ENCODE measurements at regions of chr13 and their contacts with region 1.

Region 1: DNA sequence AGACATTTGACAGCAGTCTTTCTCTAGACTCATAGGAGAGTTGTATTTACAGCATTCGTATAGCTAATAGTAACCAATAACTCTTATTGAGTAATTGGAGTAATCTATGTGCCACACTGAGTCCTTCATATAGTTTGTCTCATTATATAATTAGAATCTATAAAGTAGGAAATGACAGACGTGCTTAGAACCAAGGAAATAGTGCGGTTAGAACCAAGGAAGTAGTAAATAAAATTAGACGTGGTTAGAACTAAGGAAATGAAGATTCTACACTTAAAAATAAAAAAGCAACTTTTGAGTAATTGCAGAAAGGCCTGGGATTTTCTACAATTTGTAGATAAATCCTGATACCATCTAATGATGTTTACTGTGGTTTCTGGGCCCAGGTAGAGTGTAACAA is 107.8 kb upstream of the TNFSF11 start:
- DNase-seq: no peak
- CTCF ChIP-seq: no peak

Region 2: GRCh38 chr13:42247883-42248282 is 218.2 kb before region 1 on chr13:
- CTCF ChIA-PET with region 1: no interaction called
- POLR2A ChIA-PET with region 1: no interaction called
- DNase-seq: no peak
- CTCF ChIP-seq: no peak

Region 3: GRCh38 chr13:42478531-42479156 is 12.5 kb after region 1 on chr13:
- CTCF ChIA-PET with region 1: interaction called, 10 read pairs
- POLR2A ChIA-PET with region 1: no interaction called
- DNase-seq: peak; percentile 34
- CTCF ChIP-seq: peak; percentile 33